AG04450 (cell line): ENCODE measurements at regions of chr7 and their contacts with region 1.

Region 1: DNA sequence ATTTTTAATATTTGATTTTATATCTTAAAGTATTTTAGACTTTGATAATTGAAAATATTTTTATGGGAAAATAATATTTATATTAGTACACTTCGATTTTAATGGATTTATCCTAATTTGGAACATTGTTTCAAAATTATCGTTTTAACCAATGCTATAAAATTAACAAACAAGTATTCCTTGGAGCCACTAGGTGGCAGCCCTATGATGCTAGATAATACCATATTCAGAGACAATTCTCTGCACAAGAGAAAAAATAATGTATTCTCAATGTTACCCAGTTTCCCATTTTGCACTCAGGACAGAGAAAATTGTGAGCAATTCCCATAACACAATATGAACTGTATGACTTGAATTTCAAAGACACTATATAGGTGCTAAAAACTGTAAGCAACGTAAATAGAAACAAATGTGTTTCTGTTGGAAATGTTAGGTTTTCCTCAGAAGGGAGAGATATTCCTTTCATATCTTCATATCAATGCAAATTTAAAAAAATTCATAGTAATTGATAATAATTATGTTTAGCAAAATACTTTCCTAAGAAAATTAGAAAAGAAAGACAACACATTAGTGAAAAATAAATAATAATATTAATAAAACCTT is 237.8 kb downstream of the SEMA3E start:
- DNase-seq: peak; percentile 15
- H3K4me3 ChIP-seq: no peak overlapping the region
- H3K27ac ChIP-seq: no peak overlapping the region
- H3K27me3 ChIP-seq: no peaks in the 10 kb centered on the region
- CTCF ChIP-seq: peak; percentile 76

Region 2: GRCh38 chr7:82468435-82468834 is 942.7 kb before region 1 on chr7:
- CTCF ChIA-PET with region 1: no interaction called
- POLR2A ChIA-PET with region 1: no interaction called
- DNase-seq: no peak
- H3K4me3 ChIP-seq: no peak overlapping the region
- H3K27ac ChIP-seq: no peak overlapping the region
- H3K27me3 ChIP-seq: no peaks in the 10 kb centered on the region
- CTCF ChIP-seq: no peak

Region 3: GRCh38 chr7:83161899-83162401 is 249.1 kb before region 1 on chr7:
- CTCF ChIA-PET with region 1: no interaction called
- POLR2A ChIA-PET with region 1: no interaction called
- DNase-seq: no peak
- H3K4me3 ChIP-seq: peak overlapping the region; percentile 65
- H3K27ac ChIP-seq: no peak overlapping the region
- H3K27me3 ChIP-seq: peaks cover 4% of the 10 kb centered on the region
- CTCF ChIP-seq: no peak

Region 4: DNA sequence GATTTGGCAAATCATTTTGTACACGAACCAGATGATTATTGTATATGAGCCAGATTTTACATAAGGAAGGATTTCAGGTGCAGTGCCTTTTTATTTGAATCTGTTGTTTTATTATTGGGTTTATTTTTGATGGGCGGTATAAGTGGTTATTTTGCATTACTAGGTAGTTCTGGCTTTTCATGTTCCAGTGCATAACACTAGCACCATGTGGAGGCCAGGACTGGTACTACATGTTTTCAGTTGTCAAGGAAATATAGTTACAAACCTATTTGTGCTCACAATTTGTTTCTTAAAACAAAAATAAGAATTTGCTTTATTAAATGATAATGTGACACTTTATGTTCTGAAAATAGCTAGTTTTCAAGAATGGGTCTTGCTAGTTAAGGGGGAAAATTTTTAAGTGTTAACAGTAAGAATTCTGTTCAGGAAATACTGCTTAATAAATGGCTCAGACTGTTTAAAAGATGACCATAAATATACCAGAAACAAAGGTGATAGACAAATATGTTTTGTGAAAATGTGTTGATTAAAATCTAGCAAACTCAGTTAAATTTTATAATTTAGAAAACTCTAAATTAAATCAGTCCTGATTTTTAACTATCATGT is 245.0 kb after region 1 on chr7:
- CTCF ChIA-PET with region 1: interaction called, 20 read pairs
- POLR2A ChIA-PET with region 1: no interaction called
- DNase-seq: peak; percentile 16
- H3K4me3 ChIP-seq: no peak overlapping the region
- H3K27ac ChIP-seq: no peak overlapping the region
- H3K27me3 ChIP-seq: no peaks in the 10 kb centered on the region
- CTCF ChIP-seq: peak; percentile 98